ENCODE measurements at regions of chr6 and their contacts with region 1.

Region 1: GRCh38 chr6:52162940-52163908 is 23.0 kb upstream of the IL17A start:
- DNase-seq: peak; percentile 34
- H3K4me3 ChIP-seq: no peak overlapping the region
- H3K27ac ChIP-seq: no peak overlapping the region
- H3K4me1 ChIP-seq: peaks cover under 1% of the 10 kb centered on the region
- H3K27me3 ChIP-seq: no peaks in the 10 kb centered on the region
- CTCF ChIP-seq: peak; percentile 93 to 97

Region 2: DNA sequence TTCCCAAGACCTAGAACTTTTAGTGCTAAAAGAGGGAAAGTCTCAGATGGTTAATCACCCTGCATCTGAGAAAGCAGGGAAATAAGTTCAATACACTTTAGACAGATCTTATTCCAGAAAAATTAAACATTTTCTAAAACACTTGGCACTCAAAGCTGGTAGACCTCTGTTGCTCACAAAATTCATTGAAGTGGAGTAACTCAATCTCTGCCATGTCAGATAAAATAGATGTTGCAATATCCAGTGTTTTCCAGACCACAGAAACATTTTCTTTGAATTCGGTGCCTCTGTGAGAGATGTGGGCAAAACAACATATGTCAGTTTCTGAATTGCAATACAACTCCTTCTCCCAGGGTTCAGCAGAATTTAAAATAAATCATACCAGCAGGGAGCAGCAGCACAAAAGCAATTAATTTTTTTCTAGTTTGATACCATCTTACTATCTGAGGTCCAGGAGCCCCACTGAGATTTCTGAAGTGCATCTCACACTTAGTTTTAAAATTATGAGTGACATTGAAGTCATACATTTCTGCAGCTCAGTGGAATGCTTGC is 64.5 kb before region 1 on chr6:
- CTCF ChIA-PET with region 1: no interaction called
- dilution Hi-C with region 1: no loop called
- in situ Hi-C with region 1: no loop called
- intact Hi-C with region 1: loop called (anchors 5 kb)
- DNase-seq: no peak
- H3K4me3 ChIP-seq: no peak overlapping the region
- H3K27ac ChIP-seq: no peak overlapping the region
- H3K4me1 ChIP-seq: peaks cover 7% of the 10 kb centered on the region
- H3K27me3 ChIP-seq: no peaks in the 10 kb centered on the region
- CTCF ChIP-seq: no peak

Region 3: GRCh38 chr6:52233975-52234823 is 71.0 kb after region 1 on chr6:
- CTCF ChIA-PET with region 1: no interaction called
- dilution Hi-C with region 1: no loop called
- in situ Hi-C with region 1: loop called in 1 of 2 experiments (anchors 10 kb)
- intact Hi-C with region 1: loop called (anchors 1 kb)
- DNase-seq: peak; percentile 75
- H3K4me3 ChIP-seq: no peak overlapping the region
- H3K27ac ChIP-seq: no peak overlapping the region
- H3K4me1 ChIP-seq: no peaks in the 10 kb centered on the region
- H3K27me3 ChIP-seq: peaks cover 3% of the 10 kb centered on the region
- CTCF ChIP-seq: peak; percentile 67

Measured in mammary epithelial cell (primary cell).